Heart right ventricle (tissue), 16 donors: ENCODE measurements at regions of chr14 and their contacts with region 1.

Region 1: GRCh38 chr14:21092273-21093011 is 6.0 kb downstream of the ZNF219 start:
- DNase-seq: peak; percentile 80 to 90
- ATAC-seq: peak; percentile 77 to 91 (median 86)
- H3K4me3 ChIP-seq: no peak overlapping the region
- H3K27ac ChIP-seq: peak overlapping the region in 3 of 10 donors; percentile 11 to 53 (median 28)
- H3K4me1 ChIP-seq: peaks cover 0 to 39% (median 17%) of the 10 kb centered on the region in 9 donors
- H3K27me3 ChIP-seq: no peaks in the 10 kb centered on the region
- CTCF ChIP-seq: peak; percentile 99 to 100 (median 100)

Region 2: GRCh38 chr14:21014761-21015190 is 77.7 kb before region 1 on chr14:
- intact Hi-C with region 1: loop called (anchors 1 to 5 kb)
- DNase-seq: peak; percentile 70 to 91
- ATAC-seq: peak; percentile 70 to 89 (median 83)
- H3K4me3 ChIP-seq: no peak overlapping the region
- H3K27ac ChIP-seq: peak overlapping the region in 4 of 10 donors; percentile 6 to 34 (median 14)
- H3K4me1 ChIP-seq: peaks cover 0 to 38% (median 6%) of the 10 kb centered on the region in 9 donors
- H3K27me3 ChIP-seq: no peaks in the 10 kb centered on the region
- CTCF ChIP-seq: peak; percentile 84 to 98 (median 93)

Region 3: DNA sequence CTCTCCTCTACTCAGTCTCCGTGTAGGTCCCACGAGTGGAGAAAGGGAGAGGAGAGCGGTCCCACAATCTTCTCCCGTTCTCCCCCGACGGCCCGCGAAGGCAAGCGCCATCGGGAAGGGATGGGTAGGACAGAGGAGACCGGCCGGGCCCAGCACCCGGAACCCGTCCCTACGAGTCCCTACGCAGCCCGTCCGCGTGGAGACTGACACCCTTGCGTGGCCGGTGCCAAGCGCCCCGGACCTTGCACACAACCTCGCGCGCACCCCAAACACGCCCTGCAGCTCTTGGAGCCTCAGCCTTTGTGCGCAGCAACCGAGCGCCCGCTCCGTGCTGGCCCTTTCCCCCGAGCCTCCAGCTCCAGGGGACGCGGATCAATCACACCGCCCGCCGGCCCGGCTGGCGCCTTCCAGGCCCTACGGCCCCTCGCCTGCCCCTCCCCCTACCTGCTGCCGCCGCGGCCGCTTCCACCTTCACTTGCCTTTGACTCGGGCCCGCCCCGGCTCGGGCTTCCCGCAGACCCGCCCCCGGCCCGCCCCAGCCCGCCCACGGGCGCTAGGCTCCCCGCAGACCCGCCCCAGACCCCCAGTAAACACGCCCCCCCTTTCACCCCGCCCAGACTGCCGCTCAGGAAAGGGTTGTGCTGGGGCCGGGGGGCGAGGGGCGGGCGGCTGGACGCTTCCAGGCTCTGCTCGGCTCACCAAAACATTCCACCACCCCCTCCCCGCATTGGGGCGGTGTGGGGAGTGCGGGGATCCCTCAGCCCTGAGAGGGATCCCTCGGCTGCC is 67.7 kb before region 1 on chr14 and contains the start of gene NDRG2:
- intact Hi-C with region 1: loop called in 6 of 10 experiments (anchors 5 kb)
- DNase-seq: peak; percentile 87 to 91
- ATAC-seq: peak; percentile 82 to 94 (median 85)
- H3K4me3 ChIP-seq: peak within 1 kb of the TSS; percentile 59 to 98 (median 82)
- H3K27ac ChIP-seq: peak within 1 kb of the TSS; percentile 86 to 100 (median 98)
- H3K4me1 ChIP-seq: peaks cover 14 to 57% (median 36%) of the 10 kb centered on the region in 9 donors
- H3K27me3 ChIP-seq: peaks cover 0 to 23% (median 0%) of the 10 kb centered on the region in 7 donors
- CTCF ChIP-seq: no peak
- total RNA-seq, gene NDRG2: 242 to 420 (median 299) TPM

Region 4: DNA sequence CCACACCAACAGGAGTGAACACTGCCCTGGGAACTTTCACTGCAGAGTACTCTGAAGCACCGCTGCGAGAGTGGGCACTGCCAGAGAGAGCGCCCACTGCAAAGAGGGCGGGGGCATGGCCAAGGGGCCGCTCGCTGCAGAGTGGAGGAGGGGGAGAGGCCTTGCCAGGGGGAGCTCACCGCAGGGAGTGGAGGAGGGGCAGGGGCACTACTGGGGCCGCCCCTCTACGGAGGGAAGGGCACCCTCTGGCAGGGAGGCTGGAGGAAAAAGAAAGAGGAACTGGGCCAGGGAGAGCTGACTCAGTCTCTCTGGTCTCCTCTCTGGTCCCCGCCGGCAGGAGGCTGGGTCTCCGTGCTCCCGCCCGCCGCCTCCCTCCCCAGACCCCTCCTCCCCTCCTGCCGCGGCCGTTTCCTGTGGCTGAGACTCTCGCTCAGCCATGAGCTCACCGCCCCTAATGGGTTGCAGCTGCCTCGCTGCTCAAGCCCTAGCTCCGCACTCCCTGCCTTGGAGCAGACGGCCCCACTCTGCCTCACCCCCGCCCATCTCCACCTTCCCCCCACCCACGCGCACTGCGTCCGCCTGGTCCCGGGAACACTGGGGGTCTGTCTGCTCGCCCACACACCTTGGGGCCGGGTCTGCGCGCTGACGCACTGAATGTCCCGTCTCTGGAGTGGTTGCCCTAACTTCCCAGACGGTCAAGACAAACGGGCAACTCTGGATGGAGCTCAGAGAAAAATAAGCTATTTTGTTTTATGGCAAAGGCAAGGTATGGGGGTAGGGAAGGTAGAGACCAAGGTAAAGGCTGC is 21.0 kb before region 1 on chr14:
- intact Hi-C with region 1: loop called in 5 of 10 experiments (anchors 1 to 2 kb)
- DNase-seq: peak; percentile 88 to 91
- ATAC-seq: peak; percentile 69 to 81 (median 74)
- H3K4me3 ChIP-seq: peak overlapping the region; percentile 61 to 86 (median 78)
- H3K27ac ChIP-seq: peak overlapping the region; percentile 64 to 98 (median 95)
- H3K4me1 ChIP-seq: peaks cover 6 to 44% (median 34%) of the 10 kb centered on the region in 9 donors
- H3K27me3 ChIP-seq: peaks cover 0 to 17% (median 0%) of the 10 kb centered on the region in 7 donors
- CTCF ChIP-seq: peak in 2 of 9 donors; percentile 5 to 15

Region 5: GRCh38 chr14:21123429-21123828 is 31.0 kb after region 1 on chr14:
- intact Hi-C with region 1: no loop called
- DNase-seq: no peak
- ATAC-seq: no peak
- H3K4me3 ChIP-seq: no peak overlapping the region
- H3K27ac ChIP-seq: no peak overlapping the region
- H3K4me1 ChIP-seq: no peaks in the 10 kb centered on the region
- H3K27me3 ChIP-seq: peaks cover 0 to 24% (median 6%) of the 10 kb centered on the region in 7 donors
- CTCF ChIP-seq: no peak